Heart right ventricle (tissue), 16 donors: ENCODE measurements at regions of chr2 and their contacts with region 1.

Region 1: GRCh38 chr2:221554769-221555493 is 17.2 kb downstream of the EPHA4 start:
- DNase-seq: peak in 1 of 2 donors; percentile 30
- ATAC-seq: peak; percentile 62 to 89 (median 76)
- H3K4me3 ChIP-seq: peak overlapping the region in 4 of 10 donors; percentile 4 to 21 (median 12)
- H3K27ac ChIP-seq: peak overlapping the region; percentile 3 to 82 (median 72)
- H3K4me1 ChIP-seq: peaks cover 0 to 81% (median 30%) of the 10 kb centered on the region in 9 donors
- H3K27me3 ChIP-seq: no peaks in the 10 kb centered on the region
- CTCF ChIP-seq: no peak

Region 2: DNA sequence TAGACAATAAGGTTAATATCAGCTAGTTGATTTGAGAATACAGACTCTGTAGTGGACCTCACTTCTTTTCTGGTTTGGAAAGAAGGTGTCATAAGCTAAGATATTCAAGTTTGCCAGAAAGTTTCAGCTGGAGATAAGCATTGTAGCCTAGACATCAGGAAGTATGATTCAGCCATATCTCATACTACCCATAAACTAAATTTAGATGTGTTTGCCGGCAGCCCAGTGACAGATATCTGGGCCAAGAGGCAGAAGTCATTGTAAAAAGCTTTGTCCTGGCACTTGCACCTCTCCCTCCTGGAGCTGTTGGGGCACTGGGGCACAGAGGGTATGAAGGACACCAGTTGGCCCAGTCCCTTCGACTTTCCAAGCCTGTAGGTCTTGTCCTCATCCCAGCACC is 110.8 kb before region 1 on chr2:
- intact Hi-C with region 1: loop called in 3 of 10 experiments (anchors 10 kb)
- DNase-seq: peak; percentile 24 to 48
- ATAC-seq: peak; percentile 69 to 96 (median 92)
- H3K4me3 ChIP-seq: no peak overlapping the region
- H3K27ac ChIP-seq: peak overlapping the region in 8 of 10 donors; percentile 10 to 77 (median 49)
- H3K4me1 ChIP-seq: peaks cover 3 to 35% (median 22%) of the 10 kb centered on the region in 9 donors
- H3K27me3 ChIP-seq: no peaks in the 10 kb centered on the region
- CTCF ChIP-seq: no peak

Region 3: GRCh38 chr2:221465776-221466175 is 89.2 kb before region 1 on chr2:
- intact Hi-C with region 1: loop called in 2 of 10 experiments (anchors 2 to 10 kb)
- DNase-seq: no peak
- ATAC-seq: no peak
- H3K4me3 ChIP-seq: no peak overlapping the region
- H3K27ac ChIP-seq: no peak overlapping the region
- H3K4me1 ChIP-seq: peaks cover 0 to 42% (median 25%) of the 10 kb centered on the region in 9 donors
- H3K27me3 ChIP-seq: no peaks in the 10 kb centered on the region
- CTCF ChIP-seq: no peak